ENCODE measurements at regions of chr6 and their contacts with region 1.

Region 1: GRCh38 chr6:136812174-136812573 is 10.2 kb upstream of the PEX7 start:
- DNase-seq: no peak
- H3K4me3 ChIP-seq: no peak overlapping the region
- H3K27ac ChIP-seq: no peak overlapping the region
- H3K4me1 ChIP-seq: no peaks in the 10 kb centered on the region
- H3K27me3 ChIP-seq: no peaks in the 10 kb centered on the region
- CTCF ChIP-seq: no peak

Region 2: GRCh38 chr6:136669299-136669699 is 142.9 kb before region 1 on chr6:
- CTCF ChIA-PET with region 1: no interaction called
- POLR2A ChIA-PET with region 1: interaction called, 10 read pairs
- intact Hi-C with region 1: no loop called
- DNase-seq: peak in 1 of 2 experiments; percentile 93
- H3K4me3 ChIP-seq: no peak overlapping the region; the same call in 1 of the 2 replicates
- H3K27ac ChIP-seq: peak overlapping the region; percentile 61
- H3K4me1 ChIP-seq: peaks cover 32% of the 10 kb centered on the region
- H3K27me3 ChIP-seq: no peaks in the 10 kb centered on the region
- CTCF ChIP-seq: no peak

Region 3: GRCh38 chr6:136764517-136764993 is 47.6 kb before region 1 on chr6:
- CTCF ChIA-PET with region 1: no interaction called
- POLR2A ChIA-PET with region 1: no interaction called
- intact Hi-C with region 1: no loop called
- DNase-seq: no peak
- H3K4me3 ChIP-seq: no peak overlapping the region
- H3K27ac ChIP-seq: no peak overlapping the region
- H3K4me1 ChIP-seq: peaks cover 14% of the 10 kb centered on the region; the same call in 1 of the 2 replicates
- H3K27me3 ChIP-seq: no peaks in the 10 kb centered on the region
- CTCF ChIP-seq: no peak

Region 4: DNA sequence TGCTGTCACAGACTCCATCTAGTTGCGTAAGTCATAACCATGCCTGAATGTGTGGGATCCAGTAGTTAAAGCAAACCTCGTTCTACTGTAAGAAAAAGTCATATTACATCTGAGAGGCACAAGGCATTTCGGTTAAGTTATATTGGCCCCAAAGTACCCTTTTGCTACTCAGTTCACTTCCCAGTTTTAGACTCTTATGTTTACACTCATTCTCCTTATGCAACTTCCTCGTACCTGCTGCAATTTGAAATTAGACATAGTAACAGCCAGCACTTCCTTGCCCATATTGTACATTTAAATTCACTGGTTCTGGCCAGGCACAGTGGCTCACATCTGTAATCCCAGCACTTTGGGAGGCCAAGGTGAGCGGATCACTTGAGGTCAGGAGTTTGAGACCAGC is 47.3 kb after region 1 on chr6:
- CTCF ChIA-PET with region 1: no interaction called
- POLR2A ChIA-PET with region 1: no interaction called
- intact Hi-C with region 1: no loop called
- DNase-seq: no peak
- H3K4me3 ChIP-seq: no peak overlapping the region
- H3K27ac ChIP-seq: no peak overlapping the region
- H3K4me1 ChIP-seq: no peaks in the 10 kb centered on the region
- H3K27me3 ChIP-seq: no peaks in the 10 kb centered on the region
- CTCF ChIP-seq: no peak

Region 5: DNA sequence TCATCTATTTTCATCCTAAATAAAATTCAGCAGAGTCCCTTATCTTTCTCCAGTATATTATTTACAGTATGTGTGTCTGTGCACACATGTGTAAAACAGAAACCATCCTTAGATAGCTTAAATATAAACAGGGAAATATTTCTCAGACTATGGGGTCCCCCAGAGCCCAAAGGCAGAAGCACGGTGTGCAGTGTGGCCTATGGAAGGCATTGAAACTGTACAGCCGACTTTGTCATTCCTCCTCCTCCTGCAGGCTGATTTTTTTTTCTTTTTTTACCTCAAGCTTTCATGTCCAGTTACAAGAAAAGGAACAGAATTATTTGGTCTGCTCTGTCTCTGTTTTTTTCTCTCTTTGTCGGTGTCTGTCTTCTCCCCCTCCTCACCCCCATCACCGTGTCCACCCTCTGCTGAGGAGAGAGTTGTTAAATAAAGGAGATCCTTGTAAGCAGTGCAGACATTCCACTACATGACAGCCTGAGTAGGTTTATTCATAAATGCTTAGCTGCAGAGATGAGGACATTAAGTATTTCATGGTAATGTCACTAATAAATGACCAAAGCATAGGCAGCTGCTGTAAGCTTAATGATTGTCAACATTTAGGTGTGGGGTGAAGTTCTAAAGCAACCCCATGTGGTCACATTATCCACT is 78.1 kb after region 1 on chr6:
- CTCF ChIA-PET with region 1: no interaction called
- POLR2A ChIA-PET with region 1: no interaction called
- intact Hi-C with region 1: no loop called
- DNase-seq: no peak
- H3K4me3 ChIP-seq: no peak overlapping the region
- H3K27ac ChIP-seq: no peak overlapping the region
- H3K4me1 ChIP-seq: peaks cover 5% of the 10 kb centered on the region
- H3K27me3 ChIP-seq: no peaks in the 10 kb centered on the region
- CTCF ChIP-seq: no peak